T-cell (primary cell): ENCODE measurements at regions of chr9 and their contacts with region 1.

Region 1: DNA sequence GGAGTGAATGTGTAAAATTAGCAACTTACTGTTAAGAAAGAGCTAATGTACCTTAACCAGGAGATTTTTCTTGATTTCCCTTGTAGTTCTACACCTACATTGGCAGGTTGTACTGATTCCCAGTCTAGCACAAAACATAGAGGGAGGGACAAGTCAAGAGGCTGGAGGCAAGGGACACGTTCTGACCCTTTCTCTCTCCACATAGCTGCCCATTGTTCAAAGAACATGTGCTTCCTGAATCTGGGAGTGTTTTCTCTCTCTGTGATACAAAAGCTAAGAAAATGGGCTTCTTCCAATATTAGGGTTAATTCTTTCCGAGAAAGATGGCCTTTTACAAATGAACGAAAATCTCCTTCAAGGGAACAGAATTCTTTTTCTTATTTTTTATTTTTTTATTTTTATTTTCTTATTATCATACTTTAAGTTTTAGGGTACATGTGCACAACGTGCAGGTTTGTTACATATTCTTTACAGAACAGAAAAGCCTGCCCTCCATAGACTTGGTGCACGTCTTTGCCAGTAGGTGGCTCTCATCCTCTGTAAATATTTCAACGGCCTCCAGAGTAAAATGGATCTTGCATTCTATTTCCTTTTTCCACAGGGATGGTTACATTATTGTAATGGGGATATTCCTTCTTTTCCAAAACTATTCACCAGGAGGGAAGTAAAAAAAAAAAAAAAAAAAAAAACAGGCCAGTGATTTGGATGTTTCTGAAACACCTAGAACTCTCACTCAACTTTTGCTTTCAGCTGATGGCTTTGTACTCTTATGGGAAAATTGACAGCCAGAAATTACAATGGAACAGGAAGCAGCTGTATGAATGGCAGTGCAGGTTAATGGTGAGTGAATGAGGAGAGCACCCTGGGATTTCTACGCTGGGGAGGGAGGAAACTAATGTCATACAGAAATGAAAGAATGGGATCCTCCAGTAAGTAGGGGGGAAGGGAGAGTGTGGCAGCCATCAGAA is 13.1 kb upstream of the IFNA5 start:
- DNase-seq: peak in 23 of 35 experiments; percentile 4 to 63 (median 16)
- ATAC-seq: peak; percentile 64 to 75 (median 68)
- H3K4me3 ChIP-seq: no peak overlapping the region
- H3K4me3 Mint-ChIP-seq: no peak overlapping the region
- H3K27ac ChIP-seq: no peak overlapping the region
- H3K27ac Mint-ChIP-seq: peak overlapping the region in 1 of 2 donors; percentile 29
- H3K4me1 ChIP-seq: no peaks in the 10 kb centered on the region
- H3K4me1 Mint-ChIP-seq: peaks cover 0 to 5% (median 2%) of the 10 kb centered on the region in 3 donors
- H3K27me3 ChIP-seq: no peaks in the 10 kb centered on the region
- H3K27me3 Mint-ChIP-seq: no peaks in the 10 kb centered on the region

Region 2: DNA sequence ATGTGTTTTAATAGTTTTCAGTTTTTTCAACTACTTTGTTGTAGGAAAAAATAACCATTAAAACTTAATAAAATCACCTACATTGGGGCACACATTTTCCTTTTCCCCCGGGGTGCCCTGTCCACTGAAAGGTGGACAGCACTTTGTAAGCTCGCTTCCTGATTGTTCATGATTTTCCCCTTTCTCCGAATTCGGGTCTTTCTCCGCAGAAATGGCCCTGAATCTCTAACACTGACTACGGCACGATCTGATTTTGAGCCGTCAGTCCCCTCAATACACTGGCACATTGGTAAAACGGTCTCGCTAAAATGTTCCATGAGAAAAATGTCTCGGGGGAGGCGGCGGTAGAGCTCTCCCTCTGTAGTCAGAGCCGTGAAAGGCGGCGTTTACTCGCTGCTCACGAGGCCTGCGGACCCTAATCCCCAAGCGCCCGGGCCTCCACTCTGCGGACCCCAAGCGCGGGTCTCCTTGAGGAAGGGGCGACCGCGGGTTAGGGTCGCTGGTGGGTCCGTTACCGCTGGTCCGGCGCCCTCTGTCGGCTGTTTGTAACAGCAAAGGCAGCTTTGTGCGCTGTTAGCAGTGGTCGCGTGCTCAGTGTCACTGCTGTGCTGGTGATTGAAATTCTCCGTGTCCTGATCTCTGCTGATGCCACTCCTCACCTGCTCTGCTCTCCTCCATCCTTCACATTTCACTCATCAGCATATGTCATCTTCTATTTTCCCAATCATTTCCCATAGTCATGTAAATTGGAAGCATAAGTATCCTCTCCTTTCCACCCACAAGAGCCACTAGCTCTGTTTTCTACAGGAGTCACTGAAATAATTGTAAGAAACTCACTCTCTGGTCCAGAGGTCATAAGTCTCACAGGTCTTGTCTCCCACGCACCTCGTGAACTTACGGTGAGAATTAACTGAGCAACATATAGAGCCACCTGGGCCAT is 77.8 kb after region 1 on chr9:
- CTCF ChIA-PET with region 1: interaction called, 7 to 11 read pairs
- POLR2A ChIA-PET with region 1: no interaction called
- DNase-seq: peak in 32 of 35 experiments; percentile 22 to 74 (median 46)
- ATAC-seq: peak; percentile 80 to 85 (median 83)
- H3K4me3 ChIP-seq: peak overlapping the region; percentile 37 to 84
- H3K4me3 Mint-ChIP-seq: peak overlapping the region; percentile 62 to 77 (median 71)
- H3K27ac ChIP-seq: no peak overlapping the region
- H3K27ac Mint-ChIP-seq: no peak overlapping the region
- H3K4me1 ChIP-seq: peaks cover 0 to 8% of the 10 kb centered on the region in 2 experiments
- H3K4me1 Mint-ChIP-seq: peaks cover 5 to 11% (median 6%) of the 10 kb centered on the region in 3 donors
- H3K27me3 ChIP-seq: peaks cover 2 to 21% of the 10 kb centered on the region in 2 experiments
- H3K27me3 Mint-ChIP-seq: peaks cover 46 to 69% of the 10 kb centered on the region in 2 donors

Region 3: DNA sequence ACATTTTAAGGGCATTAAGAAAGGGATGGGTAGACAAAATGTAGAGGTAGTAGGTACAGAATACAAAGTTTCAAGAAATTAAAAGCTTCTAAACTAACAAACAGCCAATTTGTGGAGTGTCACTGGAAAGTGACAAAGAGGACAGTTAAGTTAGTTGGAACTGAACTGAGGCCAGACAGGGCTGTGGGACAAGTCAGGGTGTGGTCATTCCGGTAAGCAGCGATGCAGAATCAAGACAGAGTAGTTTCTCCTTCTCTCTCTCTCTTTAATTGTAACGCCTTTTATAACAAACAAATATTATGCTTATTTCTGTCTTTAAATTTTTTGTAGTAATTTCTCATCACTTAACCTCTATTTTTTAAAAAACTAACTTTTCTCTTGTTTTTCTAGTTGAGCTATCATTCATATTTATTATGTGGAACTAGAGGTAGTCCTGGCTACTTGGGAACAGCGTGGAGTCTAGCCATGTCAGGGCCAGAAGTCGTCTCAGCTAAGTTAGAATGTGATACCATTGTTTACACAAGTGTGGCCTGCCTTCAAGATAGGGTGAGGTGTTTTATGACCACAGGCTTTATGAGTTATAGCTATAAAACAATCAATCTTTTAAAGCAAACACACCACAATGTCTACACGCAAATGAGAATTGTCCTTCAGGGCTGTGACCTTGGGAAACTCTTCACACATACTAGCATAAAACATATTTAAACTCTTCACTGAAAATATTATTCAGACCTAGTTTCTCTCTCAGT is 806.2 kb after region 1 on chr9:
- CTCF ChIA-PET with region 1: no interaction called
- POLR2A ChIA-PET with region 1: no interaction called
- DNase-seq: no peak
- ATAC-seq: no peak
- H3K4me3 ChIP-seq: no peak overlapping the region
- H3K4me3 Mint-ChIP-seq: no peak overlapping the region
- H3K27ac ChIP-seq: no peak overlapping the region
- H3K27ac Mint-ChIP-seq: no peak overlapping the region
- H3K4me1 ChIP-seq: no peaks in the 10 kb centered on the region
- H3K4me1 Mint-ChIP-seq: peaks cover 0 to 6% (median 3%) of the 10 kb centered on the region in 3 donors
- H3K27me3 ChIP-seq: no peaks in the 10 kb centered on the region
- H3K27me3 Mint-ChIP-seq: peaks cover 15% of the 10 kb centered on the region in 2 donors